ENCODE measurements at regions of chr18 and their contacts with region 1.

Region 1: DNA sequence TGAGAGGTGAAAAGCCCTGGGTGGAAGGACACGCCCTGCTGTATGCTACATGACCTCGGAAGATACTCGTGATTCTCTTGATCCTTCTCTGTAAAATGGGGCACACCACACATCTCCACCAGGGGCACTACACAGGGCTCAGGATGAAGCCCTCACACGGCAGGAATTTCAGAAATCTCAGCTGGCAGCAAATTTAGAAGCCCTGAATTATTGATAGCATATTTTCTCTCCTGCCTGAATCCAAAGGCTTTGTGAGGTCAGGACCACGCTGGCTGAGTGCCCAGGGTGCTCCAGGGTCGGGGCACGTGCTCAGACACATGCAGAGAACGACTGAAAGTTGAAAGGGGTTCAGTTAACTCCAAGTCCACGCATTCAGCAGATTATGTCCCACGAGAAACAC is 42.1 kb upstream of the GALR1 start:
- DNase-seq: peak; percentile 62
- ATAC-seq: peak; percentile 53 to 78

Region 2: GRCh38 chr18:77054606-77055428 is 152.7 kb before region 1 on chr18:
- intact Hi-C with region 1: loop called (anchors 5 to 10 kb)
- DNase-seq: peak; percentile 88
- ATAC-seq: peak; percentile 82 to 87

Region 3: GRCh38 chr18:77132371-77133050 is 75.0 kb before region 1 on chr18 and contains the start of gene MBP:
- intact Hi-C with region 1: loop called in 1 of 2 experiments (anchors 5 kb)
- DNase-seq: peak; percentile 64
- ATAC-seq: peak; percentile 67 to 70
- total RNA-seq, gene MBP: 21.7 to 24.7 TPM

Region 4: DNA sequence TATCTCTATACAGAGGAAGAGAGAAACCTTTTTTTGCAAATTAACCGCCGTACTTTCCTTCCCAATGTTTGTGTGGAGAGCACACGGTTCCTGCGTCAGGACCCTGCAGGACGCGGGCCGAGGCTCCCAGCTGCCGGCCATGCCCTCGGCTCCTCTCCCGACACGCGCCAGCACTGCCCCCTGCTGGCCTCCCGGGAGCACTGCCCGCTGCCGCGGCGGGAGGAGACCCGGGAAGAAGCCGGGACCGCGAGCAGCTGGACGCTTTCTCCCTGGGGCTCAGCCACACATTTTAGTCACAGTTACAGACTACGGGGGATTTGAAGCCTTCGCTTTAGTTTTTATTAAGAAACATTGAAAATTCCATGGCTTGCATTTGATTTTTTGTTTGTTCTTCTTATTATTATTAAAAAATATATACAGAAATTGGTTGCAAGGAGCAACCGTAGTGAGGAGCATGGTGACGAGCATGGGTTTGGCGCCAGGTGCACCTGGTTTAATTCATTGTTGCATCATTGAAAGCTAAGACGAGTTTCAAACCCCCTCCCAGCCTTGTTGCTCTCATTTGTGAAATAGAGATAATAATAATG is 443.4 kb after region 1 on chr18:
- intact Hi-C with region 1: loop called in 1 of 2 experiments (anchors 10 kb)
- DNase-seq: peak; percentile 76
- ATAC-seq: peak; percentile 84 to 97